Kidney (tissue), 22 donors: ENCODE measurements at regions of chr15 and their contacts with region 1.

Region 1: DNA sequence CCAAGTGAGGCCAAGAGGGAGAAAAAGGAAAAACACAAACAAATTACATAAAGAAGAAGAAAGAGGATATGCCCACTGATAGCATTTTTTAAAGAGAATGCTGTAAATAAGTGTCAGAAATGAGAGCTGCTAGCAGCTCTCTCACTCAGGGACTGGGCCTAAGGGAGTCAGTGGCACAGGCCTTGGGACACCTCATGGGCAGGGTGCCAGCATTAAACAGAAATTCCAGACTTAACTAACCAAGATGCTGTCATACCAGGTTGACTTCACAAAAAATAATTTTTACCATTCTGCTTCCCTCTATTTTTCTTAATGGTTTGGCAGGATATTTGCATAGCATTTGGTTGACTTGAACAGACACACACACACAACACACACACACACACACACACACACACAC is 92.3 kb upstream of the ADAMTSL3 start:
- DNase-seq: peak in 1 of 5 donors; percentile 11
- H3K4me3 ChIP-seq: no peak overlapping the region
- H3K27ac ChIP-seq: no peak overlapping the region
- H3K4me1 ChIP-seq: no peaks in the 10 kb centered on the region
- H3K27me3 ChIP-seq: no peaks in the 10 kb centered on the region
- CTCF ChIP-seq: no peak

Region 2: GRCh38 chr15:83446904-83447709 is 114.6 kb before region 1 on chr15 and contains the start of gene SH3GL3:
- intact Hi-C with region 1: loop called (anchors 10 kb)
- DNase-seq: peak; percentile 91 to 96 (median 93)
- H3K4me3 ChIP-seq: peak within 1 kb of the TSS in 2 of 3 donors; percentile 58 to 63
- H3K27ac ChIP-seq: no peak within 1 kb of the TSS
- H3K4me1 ChIP-seq: peaks cover 0 to 2% (median 0%) of the 10 kb centered on the region in 3 donors
- H3K27me3 ChIP-seq: no peaks in the 10 kb centered on the region
- CTCF ChIP-seq: no peak
- total RNA-seq, gene SH3GL3: 0.47 TPM

Region 3: GRCh38 chr15:83458381-83458780 is 103.3 kb before region 1 on chr15:
- intact Hi-C with region 1: no loop called
- DNase-seq: peak in 4 of 5 donors; percentile 50 to 93 (median 74)
- H3K4me3 ChIP-seq: no peak overlapping the region
- H3K27ac ChIP-seq: no peak overlapping the region
- H3K4me1 ChIP-seq: no peaks in the 10 kb centered on the region
- H3K27me3 ChIP-seq: no peaks in the 10 kb centered on the region
- CTCF ChIP-seq: no peak